PC-9 (cell line): ENCODE measurements at regions of chr6 and their contacts with region 1.

Region 1: DNA sequence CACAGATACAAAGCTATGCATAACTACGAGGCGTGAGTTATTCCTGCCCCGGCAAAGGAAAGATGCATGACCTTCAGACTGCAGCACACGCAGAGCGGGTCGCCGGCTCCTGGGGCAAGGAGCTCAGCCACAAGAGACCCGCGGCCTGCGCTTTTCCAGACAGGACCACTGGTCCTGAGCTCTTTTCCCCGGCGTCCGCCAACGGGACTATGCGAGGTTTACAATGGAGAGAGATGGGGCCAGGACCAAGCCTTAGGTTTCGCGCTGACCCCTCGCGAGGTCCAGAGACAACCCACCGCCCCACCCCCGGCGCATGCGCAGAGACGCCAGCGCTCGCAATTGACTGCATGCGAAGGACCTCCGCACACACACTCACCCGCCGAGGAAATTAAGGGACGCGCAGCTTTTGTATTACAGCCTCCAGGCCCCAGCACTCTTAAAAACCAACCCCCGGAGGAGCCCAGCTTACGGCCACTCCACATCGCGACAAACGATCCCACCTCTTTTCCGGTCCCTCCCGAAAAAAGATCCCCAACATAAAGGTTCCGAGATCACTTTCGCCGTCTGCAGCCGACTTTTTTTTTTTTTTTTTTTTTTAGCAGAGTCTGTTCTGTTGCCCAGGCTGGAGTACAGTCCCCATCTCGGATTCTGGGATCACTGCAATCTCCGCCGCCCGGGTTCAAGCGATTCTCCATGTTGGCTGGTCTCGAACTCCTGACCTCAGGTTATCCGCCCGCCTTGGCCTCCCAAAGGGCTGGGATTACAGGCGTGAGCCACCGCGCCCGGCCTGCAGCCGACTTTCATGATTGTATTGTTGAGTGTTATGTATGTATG is at the start of gene COQ3:
- DNase-seq: peak; percentile 70 to 73
- H3K4me3 ChIP-seq: peak within 1 kb of the TSS; percentile 96
- H3K27ac ChIP-seq: peak within 1 kb of the TSS; percentile 76
- H3K4me1 ChIP-seq: peaks cover 10% of the 10 kb centered on the region; the same call in 1 of the 2 replicates
- H3K27me3 ChIP-seq: no peaks in the 10 kb centered on the region
- CTCF ChIP-seq: no peak
- total RNA-seq, gene COQ3: 10.9 and 14.4 TPM in 2 replicates

Region 2: DNA sequence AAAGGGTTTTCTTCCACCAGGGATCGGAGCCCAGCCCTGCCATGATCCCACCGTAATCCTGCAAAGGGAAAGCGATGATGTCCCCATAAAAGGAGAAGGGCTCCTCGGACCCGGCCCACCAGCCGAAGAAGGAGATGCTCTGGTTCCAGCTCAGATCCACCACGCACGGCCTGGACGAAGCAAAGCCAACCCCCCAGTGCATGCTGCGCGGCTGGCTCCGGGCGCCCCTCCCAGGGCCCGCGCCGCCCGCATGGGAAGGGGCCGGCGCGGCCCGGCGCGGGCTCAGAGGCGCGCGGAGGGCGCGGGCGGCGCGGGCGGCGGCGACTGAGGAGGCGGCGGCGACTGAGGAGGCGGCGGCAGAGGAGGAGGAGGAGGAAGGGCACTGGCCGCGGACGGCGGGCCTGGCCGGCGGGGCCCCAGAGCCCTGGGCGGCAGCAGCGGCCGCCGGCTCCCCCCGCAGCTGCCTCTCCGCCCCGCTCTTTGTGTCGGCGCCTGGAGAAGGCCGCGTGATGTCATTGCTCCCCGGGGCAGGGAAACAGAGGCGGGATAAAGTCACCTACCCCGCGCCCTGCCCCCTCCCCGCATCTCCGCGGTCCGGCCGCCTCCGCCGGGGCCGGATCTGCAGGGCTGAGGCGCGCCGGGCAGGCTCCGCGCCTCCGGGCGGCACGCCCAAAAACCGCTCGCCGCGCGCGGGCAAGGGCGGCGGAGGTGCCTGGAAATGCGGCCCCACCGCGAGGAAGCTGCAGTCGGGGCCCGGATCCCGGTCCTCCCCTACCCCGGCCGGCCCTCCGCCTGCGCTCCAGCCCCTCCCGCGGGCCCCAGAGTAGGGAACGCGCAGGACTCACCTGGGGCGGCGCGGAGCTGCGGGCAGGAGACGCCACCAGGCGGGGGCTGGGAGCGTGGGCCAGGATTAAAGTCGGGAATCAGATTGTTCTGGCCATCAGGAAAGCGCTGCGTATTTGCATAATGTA is 44.5 kb before region 1 on chr6 and contains the start of gene FAXC:
- CTCF ChIA-PET with region 1: no interaction called
- POLR2A ChIA-PET with region 1: no interaction called
- intact Hi-C with region 1: loop called (anchors 1 kb)
- DNase-seq: peak; percentile 66 to 72
- H3K4me3 ChIP-seq: peak within 1 kb of the TSS; percentile 81
- H3K27ac ChIP-seq: no peak within 1 kb of the TSS
- H3K4me1 ChIP-seq: peaks cover 12% of the 10 kb centered on the region
- H3K27me3 ChIP-seq: no peaks in the 10 kb centered on the region
- CTCF ChIP-seq: no peak; the same call in 1 of the 2 replicates
- total RNA-seq, gene FAXC: 3.3 and 4.2 TPM in 2 replicates

Region 3: GRCh38 chr6:99364026-99364425 is 29.9 kb before region 1 on chr6:
- CTCF ChIA-PET with region 1: interaction called, 15 read pairs
- POLR2A ChIA-PET with region 1: no interaction called
- intact Hi-C with region 1: no loop called
- DNase-seq: no peak
- H3K4me3 ChIP-seq: no peak overlapping the region
- H3K27ac ChIP-seq: no peak overlapping the region
- H3K4me1 ChIP-seq: no peaks in the 10 kb centered on the region
- H3K27me3 ChIP-seq: no peaks in the 10 kb centered on the region
- CTCF ChIP-seq: no peak